Mammary epithelial cell (primary cell): ENCODE measurements at regions of chr10 and their contacts with region 1.

Region 1: GRCh38 chr10:101161494-101162299 is 30.6 kb downstream of the TLX1 start:
- DNase-seq: peak; percentile 71
- H3K4me3 ChIP-seq: peak overlapping the region in 2 of 3 experiments; percentile 16 to 29
- H3K27ac ChIP-seq: no peak overlapping the region
- H3K4me1 ChIP-seq: peaks cover 9% of the 10 kb centered on the region
- H3K27me3 ChIP-seq: no peaks in the 10 kb centered on the region
- CTCF ChIP-seq: peak; percentile 96 to 98

Region 2: DNA sequence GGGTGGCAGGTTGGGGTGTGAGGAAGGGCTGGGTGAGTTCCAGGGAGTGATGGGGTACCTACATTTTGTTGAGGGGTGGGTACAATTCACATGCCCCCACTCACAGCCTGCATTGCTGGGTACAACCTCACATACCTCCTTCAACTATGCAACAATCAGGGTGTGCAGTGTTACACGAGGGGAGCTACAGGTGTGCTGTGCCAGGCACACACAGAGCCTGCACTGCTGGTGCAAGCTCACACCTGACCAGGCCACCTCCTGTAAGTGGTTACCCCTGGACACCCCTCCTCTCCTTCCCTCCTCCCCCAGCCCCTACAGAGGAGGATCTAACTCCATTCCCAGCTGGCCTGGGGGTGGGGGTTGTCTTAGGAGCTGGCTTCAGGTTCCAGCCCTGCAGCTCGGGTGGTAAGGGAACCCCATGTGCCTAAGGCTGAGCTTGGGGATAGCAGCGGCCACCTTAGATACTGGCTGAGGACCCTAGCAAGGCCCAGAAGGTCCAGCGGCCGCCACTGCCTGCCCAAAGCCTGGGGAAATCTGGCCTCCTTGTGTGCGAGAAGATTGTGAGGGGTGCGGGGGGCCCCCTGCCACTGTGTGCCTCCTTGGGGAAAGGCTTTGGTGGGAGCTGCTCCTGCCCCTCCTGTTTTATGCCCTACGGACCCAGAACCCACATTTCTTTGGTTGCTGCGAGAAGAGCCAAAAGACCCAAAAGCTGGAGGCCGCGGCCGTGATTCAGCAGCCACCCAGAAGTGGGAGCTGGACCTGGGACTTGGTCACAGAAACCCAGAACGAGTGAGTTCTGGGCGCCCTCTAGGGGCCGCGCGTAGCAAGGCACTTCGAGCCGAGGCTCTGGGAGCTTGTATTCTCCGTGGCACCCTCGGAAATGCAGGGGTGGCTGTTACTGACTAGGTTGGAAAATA is 19.8 kb before region 1 on chr10:
- CTCF ChIA-PET with region 1: no interaction called
- dilution Hi-C with region 1: no loop called
- in situ Hi-C with region 1: no loop called
- intact Hi-C with region 1: no loop called
- DNase-seq: peak; percentile 74
- H3K4me3 ChIP-seq: no peak overlapping the region
- H3K27ac ChIP-seq: no peak overlapping the region
- H3K4me1 ChIP-seq: peaks cover 13% of the 10 kb centered on the region
- H3K27me3 ChIP-seq: peaks cover 30% of the 10 kb centered on the region
- CTCF ChIP-seq: peak; percentile 92 to 97

Region 3: DNA sequence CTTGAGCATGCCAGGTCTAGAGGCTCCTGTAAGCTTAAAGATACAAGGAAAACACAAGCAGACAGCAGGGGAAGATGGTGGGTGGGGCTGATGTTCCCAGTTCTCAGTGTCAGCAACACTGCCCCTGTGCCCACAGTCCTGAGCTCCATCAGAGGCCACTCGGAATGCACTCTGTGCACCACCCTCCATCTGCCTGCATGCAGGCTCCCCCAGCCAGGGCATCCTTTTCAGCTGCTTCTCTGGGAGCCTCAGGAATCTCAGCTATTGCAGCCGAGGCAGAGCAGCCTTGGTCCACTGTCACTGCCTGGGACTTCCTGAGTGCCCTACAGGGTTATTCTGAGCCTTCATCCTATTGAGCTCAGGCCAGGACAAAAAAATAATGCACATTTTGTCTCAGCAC is 45.3 kb after region 1 on chr10:
- CTCF ChIA-PET with region 1: no interaction called
- dilution Hi-C with region 1: loop called (anchors 5 kb)
- in situ Hi-C with region 1: loop called in 1 of 2 experiments (anchors 5 kb)
- intact Hi-C with region 1: no loop called
- DNase-seq: no peak
- H3K4me3 ChIP-seq: no peak overlapping the region
- H3K27ac ChIP-seq: no peak overlapping the region
- H3K4me1 ChIP-seq: no peaks in the 10 kb centered on the region
- H3K27me3 ChIP-seq: peaks cover 5% of the 10 kb centered on the region
- CTCF ChIP-seq: no peak

Region 4: GRCh38 chr10:101230183-101230917 is 68.7 kb after region 1 on chr10:
- CTCF ChIA-PET with region 1: no interaction called
- dilution Hi-C with region 1: loop called (anchors 5 kb)
- in situ Hi-C with region 1: no loop called
- intact Hi-C with region 1: no loop called
- DNase-seq: no peak
- H3K4me3 ChIP-seq: no peak overlapping the region
- H3K27ac ChIP-seq: no peak overlapping the region
- H3K4me1 ChIP-seq: peaks cover 22% of the 10 kb centered on the region
- H3K27me3 ChIP-seq: peaks cover 67% of the 10 kb centered on the region
- CTCF ChIP-seq: no peak

Region 5: GRCh38 chr10:101291331-101292193 is 129.9 kb after region 1 on chr10:
- CTCF ChIA-PET with region 1: no interaction called
- dilution Hi-C with region 1: no loop called
- in situ Hi-C with region 1: no loop called
- intact Hi-C with region 1: loop called (anchors 2 kb)
- DNase-seq: no peak
- H3K4me3 ChIP-seq: peak overlapping the region; percentile 41 to 69 (median 42)
- H3K27ac ChIP-seq: no peak overlapping the region
- H3K4me1 ChIP-seq: peaks cover 10% of the 10 kb centered on the region
- H3K27me3 ChIP-seq: peaks cover 8% of the 10 kb centered on the region
- CTCF ChIP-seq: peak; percentile 32 to 72